Panc1 (cell line): ENCODE measurements at regions of chr11 and their contacts with region 1.

Region 1: GRCh38 chr11:128776424-128777284 is 82.8 kb downstream of the FLI1 start:
- DNase-seq: no peak
- ATAC-seq: peak; percentile 82
- H3K4me3 ChIP-seq: no peak overlapping the region
- H3K27ac ChIP-seq: no peak overlapping the region
- H3K4me1 ChIP-seq: no peaks in the 10 kb centered on the region
- H3K27me3 ChIP-seq: no peaks in the 10 kb centered on the region
- CTCF ChIP-seq: peak; percentile 86

Region 2: GRCh38 chr11:128725630-128726319 is 50.9 kb before region 1 on chr11:
- CTCF ChIA-PET with region 1: no interaction called
- POLR2A ChIA-PET with region 1: no interaction called
- in situ Hi-C with region 1: no loop called
- intact Hi-C with region 1: loop called (anchors 1 kb)
- DNase-seq: no peak
- ATAC-seq: no peak
- H3K4me3 ChIP-seq: no peak overlapping the region
- H3K27ac ChIP-seq: no peak overlapping the region
- H3K4me1 ChIP-seq: no peaks in the 10 kb centered on the region
- H3K27me3 ChIP-seq: no peaks in the 10 kb centered on the region
- CTCF ChIP-seq: no peak

Region 3: DNA sequence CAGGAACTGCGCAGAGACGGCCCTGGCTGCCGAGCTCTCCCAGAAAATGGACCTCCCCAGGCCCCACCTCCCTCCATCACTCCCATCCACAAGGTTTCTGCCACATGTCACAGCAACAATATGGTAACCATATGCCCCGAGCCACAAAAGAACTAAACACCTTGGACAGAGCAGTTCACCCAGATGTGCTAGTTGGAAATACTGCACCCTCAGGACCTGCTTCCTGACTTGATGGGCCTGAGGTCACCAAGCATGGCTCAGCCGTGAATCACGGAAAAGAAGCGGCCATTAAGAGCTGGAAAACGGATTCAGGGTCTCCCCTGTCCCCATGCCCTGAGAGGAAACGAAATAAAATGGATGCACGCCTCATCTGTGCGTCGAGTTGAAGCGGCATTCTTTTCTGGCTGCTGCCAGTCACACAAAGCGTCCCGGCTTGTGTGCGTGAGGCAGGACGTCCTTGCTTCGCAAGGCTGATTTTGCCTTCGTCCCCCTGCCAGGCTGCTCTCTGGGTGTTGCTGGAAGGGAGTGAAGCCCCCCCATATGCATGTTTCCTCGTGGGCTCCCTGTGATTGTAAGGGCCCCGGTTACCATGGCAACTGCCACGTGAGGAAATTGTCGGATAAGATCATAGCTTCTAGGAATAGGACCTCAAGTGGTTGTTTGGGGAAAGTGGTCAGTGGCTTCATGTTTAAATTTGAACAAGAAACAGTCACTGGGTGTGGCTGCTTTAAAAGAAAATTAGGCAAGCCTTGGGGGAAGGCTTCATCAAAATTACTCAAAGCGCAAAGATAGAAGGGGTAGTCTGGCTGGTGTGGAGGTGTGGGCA is 31.1 kb before region 1 on chr11:
- CTCF ChIA-PET with region 1: interaction called, 10 read pairs
- POLR2A ChIA-PET with region 1: no interaction called
- in situ Hi-C with region 1: no loop called
- intact Hi-C with region 1: no loop called
- DNase-seq: no peak
- ATAC-seq: no peak
- H3K4me3 ChIP-seq: no peak overlapping the region
- H3K27ac ChIP-seq: no peak overlapping the region
- H3K4me1 ChIP-seq: no peaks in the 10 kb centered on the region
- H3K27me3 ChIP-seq: no peaks in the 10 kb centered on the region
- CTCF ChIP-seq: no peak

Region 4: DNA sequence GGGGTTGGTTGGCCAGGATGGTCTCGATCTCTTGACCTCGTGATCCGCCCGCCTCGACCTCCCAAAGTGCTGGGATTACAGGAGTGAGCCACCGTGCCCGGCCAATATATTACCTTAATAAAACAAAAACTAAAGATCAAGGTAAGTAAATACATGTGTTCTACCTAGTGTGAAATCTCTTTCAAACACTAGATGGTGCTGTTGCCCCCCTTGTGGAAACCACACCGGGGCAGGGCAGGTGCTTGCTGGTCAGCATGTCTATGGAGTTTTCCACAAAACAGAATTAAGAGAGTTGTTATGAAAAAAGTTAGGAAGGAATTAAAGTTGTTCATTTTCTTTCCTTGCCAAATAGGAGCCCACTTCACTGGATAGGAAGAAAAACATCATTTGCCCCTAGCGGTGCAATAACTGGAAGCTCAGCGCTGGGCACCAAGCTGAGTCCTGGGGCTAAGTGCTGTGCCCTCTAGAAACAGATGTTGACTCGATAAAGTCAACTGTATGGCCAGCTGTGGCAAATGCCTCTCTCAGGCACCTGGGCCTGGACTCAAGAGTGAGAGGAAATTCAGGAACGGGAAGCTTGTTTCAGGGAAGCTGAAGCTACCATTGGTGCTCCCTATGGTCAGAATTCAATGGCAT is 108.2 kb after region 1 on chr11:
- CTCF ChIA-PET with region 1: no interaction called
- POLR2A ChIA-PET with region 1: no interaction called
- in situ Hi-C with region 1: no loop called
- intact Hi-C with region 1: no loop called
- DNase-seq: peak; percentile 69
- ATAC-seq: peak; percentile 90
- H3K4me3 ChIP-seq: no peak overlapping the region
- H3K27ac ChIP-seq: no peak overlapping the region
- H3K4me1 ChIP-seq: no peaks in the 10 kb centered on the region
- H3K27me3 ChIP-seq: peaks cover 25% of the 10 kb centered on the region
- CTCF ChIP-seq: peak; percentile 93

Region 5: GRCh38 chr11:128928400-128928799 is 151.7 kb after region 1 on chr11:
- CTCF ChIA-PET with region 1: no interaction called
- POLR2A ChIA-PET with region 1: no interaction called
- in situ Hi-C with region 1: no loop called
- intact Hi-C with region 1: no loop called
- DNase-seq: no peak
- ATAC-seq: no peak
- H3K4me3 ChIP-seq: no peak overlapping the region; a peak in 1 of 4 replicates
- H3K27ac ChIP-seq: no peak overlapping the region
- H3K4me1 ChIP-seq: no peaks in the 10 kb centered on the region
- H3K27me3 ChIP-seq: 0 out of 2 replicates have a peak, but pooled peaks cover 6% of the 10 kb centered on the region
- CTCF ChIP-seq: no peak